A673 (cell line): ENCODE measurements at regions of chr5 and their contacts with region 1.

Region 1: DNA sequence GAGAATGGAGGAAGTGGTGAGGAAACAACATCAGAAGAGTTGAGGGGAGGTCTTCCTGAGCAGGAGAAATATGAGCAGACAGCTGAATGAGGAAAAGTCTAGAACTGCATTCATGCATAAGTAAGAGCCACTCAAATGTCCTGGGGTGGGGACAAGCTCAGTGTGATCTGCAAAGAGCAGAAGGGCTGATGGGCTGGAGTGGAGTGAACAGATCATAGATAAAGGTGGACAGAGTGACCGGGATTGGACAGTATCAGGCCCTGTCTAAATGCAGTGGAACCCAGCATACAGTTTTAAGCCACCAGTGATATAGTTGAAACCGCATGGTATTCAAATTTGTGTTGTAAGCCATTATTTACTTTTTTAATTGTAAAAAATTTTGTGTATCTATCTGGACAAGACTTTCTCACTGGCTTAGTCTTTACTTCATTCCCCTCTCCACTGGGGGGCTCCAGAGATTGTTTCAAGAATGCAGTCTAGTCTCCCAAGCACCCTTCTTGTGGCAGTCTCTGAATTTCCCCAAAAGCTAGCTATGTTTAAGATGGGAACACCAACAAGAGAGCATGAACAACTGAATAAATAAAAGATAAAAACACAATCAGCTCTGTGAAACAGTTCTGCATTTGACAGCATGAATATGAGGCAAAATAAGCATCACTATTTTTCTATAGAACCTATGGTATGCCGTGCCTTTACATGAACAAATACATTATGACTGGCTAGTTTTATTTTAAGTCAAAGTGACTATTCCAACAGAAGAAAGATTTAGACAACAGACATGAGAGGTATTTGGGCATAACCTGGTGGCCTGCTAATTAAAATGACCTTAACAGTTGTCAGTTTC is 10.7 kb upstream of the STK32A start:
- DNase-seq: peak; percentile 52
- H3K4me3 ChIP-seq: no peak overlapping the region
- H3K27ac ChIP-seq: no peak overlapping the region
- H3K4me1 ChIP-seq: no peaks in the 10 kb centered on the region
- H3K27me3 ChIP-seq: peaks cover 34% of the 10 kb centered on the region
- CTCF ChIP-seq: peak; percentile 57

Region 2: DNA sequence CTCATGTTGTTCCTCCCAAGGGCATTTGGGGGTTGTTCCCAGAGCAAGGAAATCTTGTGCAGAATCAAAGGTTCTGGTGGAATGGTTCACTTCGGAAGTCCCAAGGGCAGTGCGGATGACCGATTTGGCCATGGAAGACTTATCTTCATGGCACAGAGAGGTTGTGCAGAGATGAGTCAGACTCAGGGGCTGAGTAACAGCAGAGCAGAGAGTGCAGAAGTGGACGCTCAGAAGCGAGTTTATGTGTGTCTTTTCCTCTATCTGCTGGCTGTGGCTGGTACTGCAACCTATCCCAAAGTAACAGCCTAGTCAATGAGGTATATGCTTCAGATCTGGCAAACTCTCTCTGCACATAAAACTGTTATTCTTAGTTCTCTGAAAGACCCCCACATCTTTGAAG is 167.6 kb after region 1 on chr5:
- CTCF ChIA-PET with region 1: no interaction called
- POLR2A ChIA-PET with region 1: no interaction called
- intact Hi-C with region 1: loop called (anchors 10 kb)
- DNase-seq: peak; percentile 50
- H3K4me3 ChIP-seq: no peak overlapping the region
- H3K27ac ChIP-seq: no peak overlapping the region
- H3K4me1 ChIP-seq: no peaks in the 10 kb centered on the region
- H3K27me3 ChIP-seq: no peaks in the 10 kb centered on the region
- CTCF ChIP-seq: peak; percentile 54

Region 3: GRCh38 chr5:147483961-147484707 is 260.0 kb after region 1 on chr5:
- CTCF ChIA-PET with region 1: no interaction called
- POLR2A ChIA-PET with region 1: no interaction called
- intact Hi-C with region 1: no loop called
- DNase-seq: peak; percentile 76
- H3K4me3 ChIP-seq: no peak overlapping the region
- H3K27ac ChIP-seq: peak overlapping the region; percentile 21
- H3K4me1 ChIP-seq: peaks cover 28% of the 10 kb centered on the region
- H3K27me3 ChIP-seq: no peaks in the 10 kb centered on the region
- CTCF ChIP-seq: no peak

Region 4: DNA sequence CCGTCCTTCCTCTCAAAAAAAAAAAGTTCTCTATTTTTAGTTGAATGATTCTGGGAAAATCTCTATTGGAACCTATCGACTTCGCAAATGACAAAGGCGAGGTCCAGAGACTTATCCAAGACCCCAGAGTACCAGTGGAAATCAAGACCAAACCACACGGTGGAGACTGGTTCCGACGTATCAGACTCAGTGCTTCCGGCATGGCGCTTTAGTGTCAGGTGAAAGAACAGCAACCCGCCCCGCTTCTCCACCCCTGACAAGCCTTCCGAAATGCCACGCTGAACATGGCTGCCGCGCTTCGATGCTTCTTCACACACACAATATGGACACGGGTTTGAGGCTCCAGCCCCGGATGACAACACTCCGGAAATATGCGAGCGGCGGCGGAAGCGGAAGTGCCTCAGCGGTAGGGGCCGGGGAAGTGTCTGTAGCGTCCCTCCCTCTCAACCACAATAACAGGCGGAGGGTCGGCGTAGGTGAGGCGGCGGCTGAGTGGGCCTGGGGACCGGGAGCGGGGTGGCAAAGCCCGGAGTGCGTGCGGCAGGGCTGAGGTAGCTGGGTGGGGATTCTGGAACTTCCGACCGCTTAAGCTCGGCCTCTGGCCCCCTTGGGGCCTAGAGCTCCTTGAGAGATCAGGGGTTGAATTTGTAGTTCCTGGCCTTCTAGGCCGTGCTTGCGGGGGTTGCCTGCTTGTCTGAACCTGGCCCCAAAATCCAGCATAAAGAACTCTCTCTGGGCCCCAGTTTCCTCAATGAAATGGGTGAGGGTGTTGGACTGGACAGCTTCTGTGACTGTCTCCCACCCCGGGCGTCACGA is 1159.6 kb after region 1 on chr5 and contains the start of gene FBXO38:
- CTCF ChIA-PET with region 1: no interaction called
- POLR2A ChIA-PET with region 1: no interaction called
- intact Hi-C with region 1: no loop called
- DNase-seq: peak; percentile 97
- H3K4me3 ChIP-seq: peak within 1 kb of the TSS; percentile 69
- H3K27ac ChIP-seq: peak within 1 kb of the TSS; percentile 69
- H3K4me1 ChIP-seq: peaks cover 9% of the 10 kb centered on the region
- H3K27me3 ChIP-seq: no peaks in the 10 kb centered on the region
- CTCF ChIP-seq: no peak
- total RNA-seq, gene FBXO38: 36.7 and 43.8 TPM in 2 replicates

Region 5: GRCh38 chr5:148615644-148616275 is 1391.6 kb after region 1 on chr5:
- CTCF ChIA-PET with region 1: no interaction called
- POLR2A ChIA-PET with region 1: no interaction called
- intact Hi-C with region 1: no loop called
- DNase-seq: no peak
- H3K4me3 ChIP-seq: no peak overlapping the region
- H3K27ac ChIP-seq: no peak overlapping the region
- H3K4me1 ChIP-seq: no peaks in the 10 kb centered on the region
- H3K27me3 ChIP-seq: peaks cover 20% of the 10 kb centered on the region
- CTCF ChIP-seq: no peak